Dorsolateral prefrontal cortex (tissue), 120 donors: ENCODE measurements at regions of chr2 and their contacts with region 1.

Region 1: DNA sequence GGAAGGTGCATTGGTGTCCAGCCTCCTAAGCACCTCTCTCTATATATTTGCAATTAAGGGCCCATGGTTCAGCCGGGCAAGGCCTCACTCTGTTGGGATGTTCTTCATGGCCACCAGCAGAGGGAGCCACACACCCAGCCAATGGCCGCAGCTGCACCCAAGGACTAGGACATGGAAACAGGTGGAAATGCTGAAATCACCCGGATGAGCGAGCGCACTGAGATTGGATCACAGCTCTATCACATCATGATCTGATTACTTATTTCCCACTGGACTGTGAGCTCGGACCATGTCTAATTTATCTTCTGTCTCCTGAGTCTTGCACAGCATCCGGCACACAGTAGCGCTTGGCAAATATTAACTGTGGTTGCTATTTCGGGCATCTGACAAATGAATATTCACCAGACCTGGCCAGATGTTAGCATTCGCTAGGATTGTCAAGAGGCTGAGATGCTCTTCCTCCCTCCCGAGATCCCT is 31.2 kb downstream of the KIF3C start:
- DNase-seq: peak; percentile 70 to 95 (median 89)
- H3K4me3 ChIP-seq: peak overlapping the region in 43 of 59 donors; percentile 2 to 54 (median 27)
- H3K27ac ChIP-seq: peak overlapping the region in 53 of 59 donors; percentile 5 to 88 (median 74)
- H3K27me3 ChIP-seq: no peaks in the 10 kb centered on the region
- CTCF ChIP-seq: peak; percentile 88 to 99 (median 97)

Region 2: DNA sequence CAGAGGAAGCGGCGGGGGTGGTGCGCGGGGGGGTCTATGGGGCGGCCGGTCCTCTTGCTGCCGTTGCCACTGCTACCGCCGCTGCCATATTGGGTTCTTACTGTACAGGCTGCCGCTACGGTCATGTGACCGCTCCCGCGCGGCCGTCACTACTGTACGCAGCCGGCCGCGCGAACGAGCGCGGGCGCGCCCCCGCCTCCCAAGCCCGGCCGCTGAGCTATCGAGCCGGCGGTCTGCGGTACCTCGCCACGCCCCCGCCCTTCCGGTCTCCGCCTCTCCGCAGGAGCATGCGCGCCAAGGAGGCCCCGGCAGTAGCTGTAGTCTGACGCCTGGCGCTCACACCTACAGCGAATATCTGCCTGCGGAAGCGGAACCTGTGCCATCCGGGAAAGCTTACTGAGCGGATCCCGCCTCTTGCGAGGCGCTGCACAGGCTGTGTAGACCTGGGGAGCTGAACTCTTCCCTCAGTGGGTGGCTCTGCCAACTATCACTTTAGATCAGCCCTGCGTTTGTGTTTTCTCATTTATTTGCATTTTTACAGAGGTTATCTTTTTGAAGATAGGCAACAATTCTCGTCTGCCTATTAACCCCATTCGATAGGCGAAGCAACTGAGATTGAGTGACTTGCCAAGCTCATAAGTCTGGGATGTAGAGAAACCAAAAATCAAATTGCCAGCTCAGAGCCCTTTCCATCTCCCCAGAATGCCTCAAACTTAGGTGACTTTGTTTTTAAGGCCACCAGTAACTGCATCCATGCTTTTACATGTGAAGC is 72.6 kb before region 1 on chr2 and contains the start of gene ASXL2:
- intact Hi-C with region 1: loop called in 1 of 2 experiments (anchors 5 kb)
- DNase-seq: peak; percentile 92 to 98 (median 97)
- H3K4me3 ChIP-seq: peak within 1 kb of the TSS; percentile 65 to 99 (median 92)
- H3K27ac ChIP-seq: peak within 1 kb of the TSS; percentile 73 to 98 (median 93)
- H3K27me3 ChIP-seq: no peaks in the 10 kb centered on the region
- CTCF ChIP-seq: peak in 45 of 56 donors; percentile 15 to 63 (median 40)
- total RNA-seq, gene ASXL2: 24.4 to 56.0 (median 34.7) TPM

Region 3: GRCh38 chr2:25982273-25982967 is 31.3 kb after region 1 on chr2 and contains the start of gene KIF3C:
- intact Hi-C with region 1: loop called in 1 of 2 experiments (anchors 2 kb)
- DNase-seq: peak; percentile 69 to 93 (median 88)
- H3K4me3 ChIP-seq: peak within 1 kb of the TSS; percentile 69 to 98 (median 90)
- H3K27ac ChIP-seq: peak within 1 kb of the TSS; percentile 28 to 95 (median 89)
- H3K27me3 ChIP-seq: no peaks in the 10 kb centered on the region
- CTCF ChIP-seq: peak in 14 of 56 donors; percentile 2 to 33 (median 21)
- total RNA-seq, gene KIF3C: 82.2 to 364 (median 248) TPM

Region 4: DNA sequence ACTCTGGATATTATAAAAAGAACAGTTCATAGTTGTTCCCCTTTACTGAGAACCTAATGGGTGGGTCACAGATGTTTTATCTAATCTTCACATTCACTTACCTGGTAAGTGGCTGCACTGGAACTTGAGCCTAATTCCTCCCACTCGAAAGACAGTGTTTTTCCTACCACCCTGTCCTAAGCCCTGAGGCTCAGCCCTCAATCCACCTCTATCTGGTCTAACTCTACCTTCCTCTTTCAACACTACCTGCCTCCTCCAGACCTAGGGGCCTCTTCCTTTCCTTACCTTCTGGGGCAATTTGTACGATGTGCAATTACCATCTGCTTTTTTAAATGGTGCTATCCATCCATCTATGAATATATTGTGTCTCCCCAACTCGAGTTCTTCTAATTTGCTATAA is 40.9 kb after region 1 on chr2:
- intact Hi-C with region 1: loop called in 1 of 2 experiments (anchors 5 kb)
- DNase-seq: no peak
- H3K4me3 ChIP-seq: peak overlapping the region in 28 of 59 donors; percentile 15 to 63 (median 50)
- H3K27ac ChIP-seq: peak overlapping the region in 7 of 59 donors; percentile 3 to 54 (median 23)
- H3K27me3 ChIP-seq: no peaks in the 10 kb centered on the region
- CTCF ChIP-seq: no peak

Region 5: GRCh38 chr2:26144953-26145680 is 194.0 kb after region 1 on chr2:
- intact Hi-C with region 1: loop called (anchors 1 to 2 kb)
- DNase-seq: peak; percentile 47 to 82 (median 66)
- H3K4me3 ChIP-seq: peak overlapping the region in 10 of 59 donors; percentile 2 to 34 (median 24)
- H3K27ac ChIP-seq: peak overlapping the region in 1 of 59 donors; percentile 28
- H3K27me3 ChIP-seq: no peaks in the 10 kb centered on the region
- CTCF ChIP-seq: peak; percentile 65 to 93 (median 84)